Mammary epithelial cell (primary cell): ENCODE measurements at regions of chr1 and their contacts with region 1.

Region 1: DNA sequence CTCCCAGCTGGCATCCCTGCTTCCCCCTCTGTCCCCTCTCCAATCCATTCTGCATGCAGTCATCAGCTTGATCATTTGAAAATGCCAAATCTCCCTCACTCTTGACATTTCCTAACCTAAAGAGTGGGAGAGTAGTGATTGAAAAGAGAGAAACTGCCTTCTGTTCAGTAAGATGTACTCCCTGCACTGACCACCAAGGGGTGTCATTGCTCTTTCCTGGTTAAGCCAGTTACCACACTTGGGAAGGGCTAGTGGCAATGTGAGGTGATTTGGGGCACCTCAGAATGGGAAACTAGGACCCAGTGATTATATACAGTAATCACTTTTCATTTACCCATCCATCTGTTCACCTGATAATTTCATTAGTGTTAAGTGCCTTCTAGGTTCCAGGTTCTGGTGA is 6.9 kb upstream of the TMEM269 start:
- DNase-seq: no peak
- H3K4me3 ChIP-seq: no peak overlapping the region
- H3K27ac ChIP-seq: no peak overlapping the region
- H3K4me1 ChIP-seq: no peaks in the 10 kb centered on the region
- H3K27me3 ChIP-seq: no peaks in the 10 kb centered on the region
- CTCF ChIP-seq: peak; percentile 77 to 83

Region 2: GRCh38 chr1:42904434-42904833 is 126.6 kb after region 1 on chr1:
- CTCF ChIA-PET with region 1: no interaction called
- dilution Hi-C with region 1: no loop called
- in situ Hi-C with region 1: no loop called
- intact Hi-C with region 1: loop called (anchors 2 kb)
- DNase-seq: no peak
- H3K4me3 ChIP-seq: no peak overlapping the region
- H3K27ac ChIP-seq: no peak overlapping the region
- H3K4me1 ChIP-seq: peaks cover 5% of the 10 kb centered on the region
- H3K27me3 ChIP-seq: no peaks in the 10 kb centered on the region
- CTCF ChIP-seq: no peak

Region 3: GRCh38 chr1:42913426-42914091 is 135.7 kb after region 1 on chr1:
- CTCF ChIA-PET with region 1: interaction called, 9 read pairs
- dilution Hi-C with region 1: no loop called
- in situ Hi-C with region 1: no loop called
- intact Hi-C with region 1: loop called (anchors 2 kb)
- DNase-seq: peak; percentile 63
- H3K4me3 ChIP-seq: no peak overlapping the region
- H3K27ac ChIP-seq: no peak overlapping the region
- H3K4me1 ChIP-seq: no peaks in the 10 kb centered on the region
- H3K27me3 ChIP-seq: no peaks in the 10 kb centered on the region
- CTCF ChIP-seq: peak; percentile 76 to 79

Region 4: DNA sequence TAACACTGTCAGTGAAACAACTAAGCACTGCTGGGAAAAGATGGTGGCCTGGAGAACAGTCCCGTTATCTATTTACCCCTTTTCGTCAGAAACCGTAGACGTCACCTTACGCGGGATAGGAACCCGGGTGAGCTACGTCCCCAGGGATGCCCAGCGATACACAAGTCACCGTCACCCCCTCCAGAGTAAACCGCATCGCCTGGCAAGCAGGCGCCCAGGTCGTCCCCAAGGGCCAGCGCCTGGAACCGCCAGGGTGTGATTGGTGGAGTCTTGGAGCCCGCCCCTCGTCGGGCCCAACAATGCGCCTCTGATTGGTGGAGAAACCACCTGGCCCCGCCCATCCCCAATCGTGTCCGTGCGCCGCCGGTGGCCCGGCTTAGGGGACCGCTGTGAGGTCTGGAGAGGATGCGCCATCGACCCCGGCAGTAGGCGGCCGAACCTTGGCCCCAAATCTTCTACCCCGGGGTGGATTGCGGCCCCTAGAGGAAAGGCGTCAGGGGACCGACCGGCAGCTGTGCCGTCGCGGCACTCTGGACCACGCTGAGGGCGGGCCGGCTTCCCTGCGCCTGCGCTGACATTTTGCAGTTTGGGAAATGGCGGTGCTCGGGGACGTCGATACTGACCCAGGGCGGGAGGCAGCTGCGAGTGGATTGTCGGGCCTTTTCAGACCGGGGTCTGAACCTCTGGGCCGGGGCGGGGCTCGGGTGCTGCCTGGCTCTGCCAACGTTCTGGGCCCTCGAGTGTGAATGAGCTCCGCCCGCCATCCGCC is 146.4 kb after region 1 on chr1:
- CTCF ChIA-PET with region 1: no interaction called
- dilution Hi-C with region 1: no loop called
- in situ Hi-C with region 1: loop called in 1 of 2 experiments (anchors 10 kb)
- intact Hi-C with region 1: no loop called
- DNase-seq: peak; percentile 77
- H3K4me3 ChIP-seq: peak overlapping the region; percentile 28 to 46 (median 35)
- H3K27ac ChIP-seq: no peak overlapping the region
- H3K4me1 ChIP-seq: peaks cover 36% of the 10 kb centered on the region
- H3K27me3 ChIP-seq: no peaks in the 10 kb centered on the region
- CTCF ChIP-seq: peak in 1 of 2 donors; percentile 30